ENCODE measurements at regions of chr9 and their contacts with region 1.

Region 1: GRCh38 chr9:37485389-37486219 is at the start of gene POLR1E:
- DNase-seq: peak; percentile 92 to 99 (median 97)
- ATAC-seq: peak; percentile 100
- H3K4me3 ChIP-seq: peak within 1 kb of the TSS; percentile 82
- H3K4me3 Mint-ChIP-seq: peak within 1 kb of the TSS; percentile 88 to 98 (median 96)
- H3K27ac ChIP-seq: peak within 1 kb of the TSS; percentile 85
- H3K27ac Mint-ChIP-seq: peak within 1 kb of the TSS; percentile 88 to 97 (median 94)
- H3K4me1 ChIP-seq: peaks cover 20% of the 10 kb centered on the region in 2 donors
- H3K4me1 Mint-ChIP-seq: peaks cover 22 to 45% (median 39%) of the 10 kb centered on the region in 7 donors
- H3K27me3 ChIP-seq: no peaks in the 10 kb centered on the region
- H3K27me3 Mint-ChIP-seq: peaks cover 8 to 9% (median 8%) of the 10 kb centered on the region in 5 donors
- total RNA-seq, gene POLR1E: 24.7 to 40.0 (median 31.0) TPM

Region 2: GRCh38 chr9:36400332-36401163 is 1085.1 kb before region 1 on chr9:
- CTCF ChIA-PET with region 1: no interaction called
- POLR2A ChIA-PET with region 1: no interaction called
- intact Hi-C with region 1: loop called in 1 of 2 experiments (anchors 1 kb)
- DNase-seq: peak; percentile 83 to 94 (median 91)
- ATAC-seq: peak; percentile 88
- H3K4me3 ChIP-seq: peak overlapping the region; percentile 77
- H3K4me3 Mint-ChIP-seq: peak overlapping the region; percentile 85 to 97 (median 92)
- H3K27ac ChIP-seq: peak overlapping the region; percentile 94
- H3K27ac Mint-ChIP-seq: peak overlapping the region; percentile 92 to 98 (median 95)
- H3K4me1 ChIP-seq: peaks cover 16 to 26% of the 10 kb centered on the region in 2 donors
- H3K4me1 Mint-ChIP-seq: peaks cover 32 to 60% (median 54%) of the 10 kb centered on the region in 7 donors
- H3K27me3 ChIP-seq: no peaks in the 10 kb centered on the region
- H3K27me3 Mint-ChIP-seq: peaks cover 0 to 2% (median 0%) of the 10 kb centered on the region in 5 donors

Region 3: DNA sequence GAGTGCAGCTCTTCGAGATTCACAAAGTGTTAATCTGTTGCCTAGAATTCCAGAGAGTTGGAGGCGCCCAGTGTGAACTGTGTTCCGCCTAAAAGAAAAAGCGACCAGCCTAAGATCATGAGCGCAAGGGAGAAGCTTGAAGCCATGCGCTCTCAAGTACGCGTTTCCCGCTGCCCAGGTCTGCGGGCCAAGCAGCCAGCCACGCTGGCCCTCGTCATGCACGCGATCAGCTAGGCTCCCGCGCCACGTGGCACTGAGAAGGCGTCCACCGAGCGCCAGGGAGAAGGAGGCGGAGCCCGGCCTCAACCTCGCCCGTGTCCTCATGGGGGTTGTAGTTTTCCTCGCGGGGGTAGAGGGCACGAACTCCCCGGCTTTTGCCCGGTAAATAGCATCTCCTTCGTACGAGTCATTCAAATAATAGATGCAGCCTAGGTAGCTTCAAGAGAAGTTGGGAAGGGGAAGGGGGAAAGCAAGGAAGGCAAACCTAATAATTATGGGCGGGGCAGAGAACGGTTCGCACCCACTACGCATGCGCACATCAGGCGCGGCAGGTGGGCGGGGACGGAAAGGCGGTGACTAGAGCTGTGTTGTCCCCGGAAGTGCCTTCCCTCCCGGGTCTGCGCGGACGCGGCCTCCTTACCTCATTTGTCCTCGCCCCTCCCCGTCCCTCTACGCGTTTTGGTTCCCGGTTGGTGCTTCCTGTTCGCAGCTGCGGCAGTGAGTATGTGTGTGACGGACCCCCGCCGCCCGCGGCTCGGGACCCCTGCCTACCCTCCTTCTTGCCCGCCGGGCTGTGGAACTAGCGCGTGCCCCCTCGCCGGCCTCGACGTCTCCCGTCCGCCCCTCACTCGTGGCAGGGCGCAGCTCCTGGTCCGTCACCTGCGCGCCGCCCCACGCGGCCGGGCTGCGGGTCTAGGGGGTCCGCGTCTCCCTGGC is 365.4 kb before region 1 on chr9 and contains the start of gene ZCCHC7:
- CTCF ChIA-PET with region 1: no interaction called
- POLR2A ChIA-PET with region 1: no interaction called
- intact Hi-C with region 1: loop called in 1 of 2 experiments (anchors 1 kb)
- DNase-seq: peak; percentile 95 to 99 (median 98)
- ATAC-seq: peak; percentile 97
- H3K4me3 ChIP-seq: peak within 1 kb of the TSS; percentile 93
- H3K4me3 Mint-ChIP-seq: peak within 1 kb of the TSS; percentile 88 to 99 (median 96)
- H3K27ac ChIP-seq: peak within 1 kb of the TSS; percentile 100
- H3K27ac Mint-ChIP-seq: peak within 1 kb of the TSS; percentile 93 to 100 (median 97)
- H3K4me1 ChIP-seq: peaks cover 11 to 25% of the 10 kb centered on the region in 2 donors
- H3K4me1 Mint-ChIP-seq: peaks cover 16 to 42% (median 32%) of the 10 kb centered on the region in 7 donors
- H3K27me3 ChIP-seq: no peaks in the 10 kb centered on the region
- H3K27me3 Mint-ChIP-seq: no peaks in the 10 kb centered on the region
- total RNA-seq, gene ZCCHC7: 26.1 to 47.1 (median 40.9) TPM

Region 4: GRCh38 chr9:37430841-37431597 is 54.6 kb before region 1 on chr9:
- CTCF ChIA-PET with region 1: no interaction called
- POLR2A ChIA-PET with region 1: no interaction called
- intact Hi-C with region 1: no loop called
- DNase-seq: no peak
- ATAC-seq: no peak
- H3K4me3 ChIP-seq: no peak overlapping the region
- H3K4me3 Mint-ChIP-seq: no peak overlapping the region
- H3K27ac ChIP-seq: no peak overlapping the region
- H3K27ac Mint-ChIP-seq: peak overlapping the region in 2 of 9 donors; percentile 11 to 53
- H3K4me1 ChIP-seq: no peaks in the 10 kb centered on the region
- H3K4me1 Mint-ChIP-seq: peaks cover 0 to 5% (median 4%) of the 10 kb centered on the region in 7 donors
- H3K27me3 ChIP-seq: no peaks in the 10 kb centered on the region
- H3K27me3 Mint-ChIP-seq: no peaks in the 10 kb centered on the region

Region 5: GRCh38 chr9:37449862-37450632 is 35.6 kb before region 1 on chr9:
- CTCF ChIA-PET with region 1: no interaction called
- POLR2A ChIA-PET with region 1: no interaction called
- intact Hi-C with region 1: loop called in 1 of 2 experiments (anchors 5 kb)
- DNase-seq: no peak
- ATAC-seq: no peak
- H3K4me3 ChIP-seq: no peak overlapping the region
- H3K4me3 Mint-ChIP-seq: no peak overlapping the region
- H3K27ac ChIP-seq: no peak overlapping the region
- H3K27ac Mint-ChIP-seq: no peak overlapping the region
- H3K4me1 ChIP-seq: no peaks in the 10 kb centered on the region
- H3K4me1 Mint-ChIP-seq: peaks cover 23 to 66% (median 44%) of the 10 kb centered on the region in 7 donors
- H3K27me3 ChIP-seq: no peaks in the 10 kb centered on the region
- H3K27me3 Mint-ChIP-seq: no peaks in the 10 kb centered on the region

Region 6: GRCh38 chr9:37520641-37521040 is 35.0 kb after region 1 on chr9:
- CTCF ChIA-PET with region 1: no interaction called
- POLR2A ChIA-PET with region 1: no interaction called
- intact Hi-C with region 1: no loop called
- DNase-seq: no peak
- ATAC-seq: no peak
- H3K4me3 ChIP-seq: no peak overlapping the region
- H3K4me3 Mint-ChIP-seq: no peak overlapping the region
- H3K27ac ChIP-seq: no peak overlapping the region
- H3K27ac Mint-ChIP-seq: peak overlapping the region in 1 of 9 donors; percentile 87
- H3K4me1 ChIP-seq: no peaks in the 10 kb centered on the region
- H3K4me1 Mint-ChIP-seq: no peaks in the 10 kb centered on the region
- H3K27me3 ChIP-seq: no peaks in the 10 kb centered on the region
- H3K27me3 Mint-ChIP-seq: no peaks in the 10 kb centered on the region

Region 7: GRCh38 chr9:37592108-37592951 is 106.7 kb after region 1 on chr9 and contains the start of gene TOMM5:
- CTCF ChIA-PET with region 1: no interaction called
- POLR2A ChIA-PET with region 1: interaction called, 4 read pairs
- intact Hi-C with region 1: loop called (anchors 1 kb)
- DNase-seq: peak; percentile 80 to 92 (median 90)
- ATAC-seq: peak; percentile 99
- H3K4me3 ChIP-seq: peak within 1 kb of the TSS; percentile 95
- H3K4me3 Mint-ChIP-seq: peak within 1 kb of the TSS; percentile 93 to 100 (median 98)
- H3K27ac ChIP-seq: peak within 1 kb of the TSS; percentile 88
- H3K27ac Mint-ChIP-seq: peak within 1 kb of the TSS; percentile 93 to 98 (median 96)
- H3K4me1 ChIP-seq: peaks cover 6 to 12% of the 10 kb centered on the region in 2 donors
- H3K4me1 Mint-ChIP-seq: peaks cover 8 to 51% (median 44%) of the 10 kb centered on the region in 7 donors
- H3K27me3 ChIP-seq: no peaks in the 10 kb centered on the region
- H3K27me3 Mint-ChIP-seq: peaks cover 0 to 22% (median 9%) of the 10 kb centered on the region in 5 donors
- total RNA-seq, gene TOMM5: 33.6 to 86.8 (median 44.7) TPM

Region 8: DNA sequence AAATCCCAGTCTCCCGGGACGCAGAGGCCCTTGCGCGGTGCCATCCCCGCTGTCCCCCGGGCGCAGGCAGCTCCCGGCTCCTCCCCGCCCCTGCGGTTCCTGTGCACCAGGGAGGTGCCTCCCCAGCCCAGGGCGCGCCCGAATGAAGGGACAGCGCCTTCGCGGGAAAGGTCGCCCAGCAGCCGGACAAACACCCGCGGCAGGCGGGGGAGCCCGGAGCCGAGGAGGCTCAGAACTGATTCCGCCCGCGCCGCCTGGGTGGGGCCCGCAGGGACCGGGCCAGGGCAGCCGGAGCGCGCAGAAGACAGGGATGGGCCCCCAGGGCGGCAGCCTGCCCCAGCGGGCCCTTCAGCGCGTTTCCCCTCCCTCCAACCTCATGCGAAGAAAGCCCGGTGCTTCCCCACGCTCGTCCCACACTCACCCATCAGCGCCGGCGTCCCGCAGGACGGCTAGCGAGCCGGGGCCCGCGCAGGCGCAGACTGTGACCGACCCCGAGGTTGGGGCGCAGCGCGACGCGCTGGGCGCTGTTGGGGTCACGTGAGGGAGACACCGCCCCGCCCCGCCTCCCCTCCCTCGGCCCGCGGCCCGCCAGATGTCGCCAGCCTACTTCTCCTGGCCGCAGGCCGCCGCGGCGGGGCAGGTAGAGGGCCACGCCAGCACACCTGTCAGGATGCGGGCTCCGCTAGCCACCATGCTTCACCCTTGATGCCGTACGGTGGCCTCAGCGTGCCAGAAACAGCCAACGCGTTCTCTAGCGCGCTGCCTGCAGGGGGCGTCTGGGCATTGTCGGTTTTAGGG is 418.2 kb after region 1 on chr9 and contains the start of gene SLC25A51:
- CTCF ChIA-PET with region 1: no interaction called
- POLR2A ChIA-PET with region 1: no interaction called
- intact Hi-C with region 1: loop called in 1 of 2 experiments (anchors 5 kb)
- DNase-seq: peak; percentile 89 to 99 (median 95)
- ATAC-seq: peak; percentile 93
- H3K4me3 ChIP-seq: peak within 1 kb of the TSS; percentile 69
- H3K4me3 Mint-ChIP-seq: peak within 1 kb of the TSS; percentile 88 to 96 (median 90)
- H3K27ac ChIP-seq: peak within 1 kb of the TSS; percentile 71
- H3K27ac Mint-ChIP-seq: peak within 1 kb of the TSS; percentile 90 to 97 (median 94)
- H3K4me1 ChIP-seq: peaks cover 20 to 22% of the 10 kb centered on the region in 2 donors
- H3K4me1 Mint-ChIP-seq: peaks cover 16 to 41% (median 30%) of the 10 kb centered on the region in 7 donors
- H3K27me3 ChIP-seq: no peaks in the 10 kb centered on the region
- H3K27me3 Mint-ChIP-seq: peaks cover 0 to 4% (median 0%) of the 10 kb centered on the region in 5 donors
- total RNA-seq, gene SLC25A51: 20.2 to 37.8 (median 30.2) TPM

Measured in naive thymus-derived CD4-positive, alpha-beta T cell (primary cell).